Endothelial cell of umbilical vein (primary cell): ENCODE measurements at regions of chr5 and their contacts with region 1.

Region 1: GRCh38 chr5:102536323-102536928 is 37.6 kb upstream of the SLCO6A1 start:
- DNase-seq: peak; percentile 27
- H3K4me3 ChIP-seq: no peak overlapping the region
- H3K27ac ChIP-seq: no peak overlapping the region
- H3K4me1 ChIP-seq: no peaks in the 10 kb centered on the region
- H3K27me3 ChIP-seq: peaks cover 0 to 3% of the 10 kb centered on the region in 2 experiments
- CTCF ChIP-seq: peak in 1 of 2 donors; percentile 18
- POLR2A ChIP-seq: no peak

Region 2: GRCh38 chr5:101894985-101895384 is 641.4 kb before region 1 on chr5:
- CTCF ChIA-PET with region 1: no interaction called
- POLR2A ChIA-PET with region 1: no interaction called
- dilution Hi-C with region 1: no loop called
- intact Hi-C with region 1: no loop called
- DNase-seq: no peak
- H3K4me3 ChIP-seq: no peak overlapping the region
- H3K27ac ChIP-seq: no peak overlapping the region
- H3K4me1 ChIP-seq: no peaks in the 10 kb centered on the region
- H3K27me3 ChIP-seq: no peaks in the 10 kb centered on the region
- CTCF ChIP-seq: no peak
- POLR2A ChIP-seq: no peak

Region 3: GRCh38 chr5:102547141-102548035 is 11.0 kb after region 1 on chr5:
- CTCF ChIA-PET with region 1: interaction called, 32 read pairs
- POLR2A ChIA-PET with region 1: no interaction called
- dilution Hi-C with region 1: no loop called
- intact Hi-C with region 1: no loop called
- DNase-seq: no peak
- H3K4me3 ChIP-seq: no peak overlapping the region
- H3K27ac ChIP-seq: no peak overlapping the region
- H3K4me1 ChIP-seq: no peaks in the 10 kb centered on the region
- H3K27me3 ChIP-seq: peaks cover 0 to 2% of the 10 kb centered on the region in 2 experiments
- CTCF ChIP-seq: no peak
- POLR2A ChIP-seq: no peak

Region 4: GRCh38 chr5:102561894-102562760 is 25.7 kb after region 1 on chr5:
- CTCF ChIA-PET with region 1: interaction called, 8 read pairs
- POLR2A ChIA-PET with region 1: no interaction called
- dilution Hi-C with region 1: no loop called
- intact Hi-C with region 1: loop called (anchors 1 kb)
- DNase-seq: no peak
- H3K4me3 ChIP-seq: no peak overlapping the region
- H3K27ac ChIP-seq: no peak overlapping the region
- H3K4me1 ChIP-seq: no peaks in the 10 kb centered on the region
- H3K27me3 ChIP-seq: peaks cover under 1 to 1% of the 10 kb centered on the region in 2 experiments
- CTCF ChIP-seq: peak; percentile 62 to 76
- POLR2A ChIP-seq: no peak

Region 5: DNA sequence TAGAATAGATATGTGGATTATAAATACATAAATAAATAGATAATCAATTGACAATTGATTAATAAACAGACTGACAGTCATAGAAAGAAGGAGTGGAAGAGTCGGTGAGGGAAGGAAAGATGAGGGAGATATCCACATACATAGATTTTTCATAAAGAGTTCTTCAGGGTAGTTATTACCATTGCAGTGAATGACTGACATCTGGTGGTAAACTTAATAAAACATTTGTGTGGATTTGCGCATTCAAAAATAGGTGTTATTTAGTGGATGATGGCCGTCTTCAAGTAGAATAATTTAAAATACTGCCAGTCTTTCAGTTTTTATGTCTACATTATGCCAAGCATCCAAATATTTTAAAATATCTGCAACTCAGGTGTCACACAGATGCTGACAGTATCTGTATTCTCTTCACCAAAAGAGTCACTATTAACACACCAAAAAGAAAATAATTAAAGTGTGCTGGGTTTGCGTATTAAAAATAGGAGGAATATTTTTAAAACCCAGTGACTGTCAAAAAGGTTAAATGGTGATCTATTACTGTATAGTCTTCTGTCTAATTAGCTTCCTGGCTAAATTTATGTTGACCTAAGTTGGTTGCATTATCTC is 504.7 kb after region 1 on chr5:
- CTCF ChIA-PET with region 1: interaction called, 10 read pairs
- POLR2A ChIA-PET with region 1: no interaction called
- dilution Hi-C with region 1: no loop called
- intact Hi-C with region 1: loop called (anchors 1 kb)
- DNase-seq: peak; percentile 71
- H3K4me3 ChIP-seq: no peak overlapping the region
- H3K27ac ChIP-seq: no peak overlapping the region
- H3K4me1 ChIP-seq: no peaks in the 10 kb centered on the region
- H3K27me3 ChIP-seq: no peaks in the 10 kb centered on the region
- CTCF ChIP-seq: peak; percentile 8 to 30
- POLR2A ChIP-seq: no peak

Region 6: DNA sequence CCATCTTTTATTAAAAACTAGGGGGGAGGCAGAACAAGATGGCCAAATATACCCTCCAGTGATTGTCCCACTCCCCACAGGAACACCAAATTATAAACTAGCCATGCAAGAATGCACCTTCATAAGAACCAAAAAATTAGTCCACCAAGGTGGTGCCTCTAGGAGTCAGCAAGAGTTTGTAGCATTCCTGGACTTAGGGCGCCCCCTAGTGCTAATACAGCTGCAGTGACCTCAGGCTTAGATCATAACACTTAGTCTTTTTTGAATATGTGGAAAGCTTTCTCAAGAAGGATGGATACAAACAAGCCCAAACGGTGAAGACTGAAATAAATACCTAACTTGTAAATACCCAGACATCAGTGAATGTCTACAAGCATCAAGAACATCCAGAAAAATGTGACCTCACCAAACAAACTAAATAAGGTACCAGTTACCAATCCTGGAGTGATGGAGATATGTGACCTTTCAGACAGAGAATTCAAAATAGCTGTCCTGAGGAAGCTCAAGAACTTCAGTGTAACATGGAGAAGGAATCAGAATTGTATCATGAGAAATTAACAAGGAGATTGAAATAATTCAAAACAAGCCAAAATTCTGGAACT is 602.9 kb after region 1 on chr5:
- CTCF ChIA-PET with region 1: interaction called, 22 read pairs
- POLR2A ChIA-PET with region 1: no interaction called
- dilution Hi-C with region 1: no loop called
- intact Hi-C with region 1: loop called (anchors 5 kb)
- DNase-seq: peak; percentile 69
- H3K4me3 ChIP-seq: no peak overlapping the region
- H3K27ac ChIP-seq: no peak overlapping the region
- H3K4me1 ChIP-seq: no peaks in the 10 kb centered on the region
- H3K27me3 ChIP-seq: no peaks in the 10 kb centered on the region
- CTCF ChIP-seq: peak; percentile 82 to 89
- POLR2A ChIP-seq: no peak